ENCODE measurements at regions of chr11 and their contacts with region 1.

Region 1: DNA sequence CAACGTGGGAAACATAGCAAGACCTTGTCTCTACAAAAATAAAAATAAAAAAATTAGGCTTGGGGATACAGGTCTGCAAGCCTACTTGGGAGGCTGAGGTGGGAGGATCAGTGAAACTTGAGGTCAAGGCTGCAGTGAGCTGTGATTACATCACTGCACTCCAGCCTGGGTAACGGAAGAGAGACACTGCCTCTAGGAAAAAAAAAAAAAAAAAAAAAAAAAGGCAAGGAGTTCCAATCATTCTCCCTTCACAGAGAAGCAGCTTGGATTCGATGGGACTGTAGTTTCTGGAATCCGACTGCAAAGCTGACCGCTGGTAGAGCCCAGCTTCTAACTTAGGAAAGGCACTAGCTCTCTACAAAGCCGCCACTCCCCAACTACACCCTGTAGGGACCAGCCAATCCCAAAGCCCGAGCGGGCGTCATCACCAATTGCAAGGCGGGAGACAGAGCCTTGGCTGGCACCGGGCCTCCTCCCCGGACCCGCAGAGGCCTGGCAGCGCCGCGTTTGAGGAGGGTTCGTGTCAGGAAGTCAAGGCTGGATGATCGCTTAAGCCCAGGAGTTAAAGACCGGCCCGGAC is 699 bp upstream of the DDB2 start:
- DNase-seq: peak; percentile 62 to 87 (median 77)
- ATAC-seq: peak; percentile 75 to 81 (median 78)
- H3K4me3 ChIP-seq: peak overlapping the region; percentile 62 to 82
- H3K4me3 Mint-ChIP-seq: peak overlapping the region; percentile 88 to 98 (median 97)
- H3K27ac ChIP-seq: peak overlapping the region; percentile 87
- H3K27ac Mint-ChIP-seq: peak overlapping the region; percentile 99 to 100
- H3K4me1 ChIP-seq: peaks cover 14 to 36% of the 10 kb centered on the region in 2 experiments
- H3K4me1 Mint-ChIP-seq: peaks cover 35 to 38% (median 37%) of the 10 kb centered on the region in 3 donors
- H3K27me3 ChIP-seq: no peaks in the 10 kb centered on the region
- H3K27me3 Mint-ChIP-seq: no peaks in the 10 kb centered on the region

Region 2: GRCh38 chr11:46827995-46828394 is 386.1 kb before region 1 on chr11:
- CTCF ChIA-PET with region 1: interaction called in 1 of 2 experiments, 10 read pairs
- POLR2A ChIA-PET with region 1: no interaction called
- DNase-seq: no peak
- ATAC-seq: no peak
- H3K4me3 ChIP-seq: no peak overlapping the region
- H3K4me3 Mint-ChIP-seq: peak overlapping the region in 1 of 3 donors; percentile 87
- H3K27ac ChIP-seq: no peak overlapping the region
- H3K27ac Mint-ChIP-seq: no peak overlapping the region
- H3K4me1 ChIP-seq: peaks cover 5 to 17% of the 10 kb centered on the region in 2 experiments
- H3K4me1 Mint-ChIP-seq: peaks cover 30 to 40% (median 38%) of the 10 kb centered on the region in 3 donors
- H3K27me3 ChIP-seq: no peaks in the 10 kb centered on the region
- H3K27me3 Mint-ChIP-seq: no peaks in the 10 kb centered on the region

Region 3: GRCh38 chr11:47233989-47234668 is 20.1 kb after region 1 on chr11:
- CTCF ChIA-PET with region 1: interaction called, 5 to 11 read pairs
- POLR2A ChIA-PET with region 1: interaction called, 4 to 9 read pairs
- DNase-seq: peak in 10 of 35 experiments; percentile 2 to 55 (median 17)
- ATAC-seq: peak in 3 of 4 experiments; percentile 50 to 54 (median 51)
- H3K4me3 ChIP-seq: no peak overlapping the region
- H3K4me3 Mint-ChIP-seq: peak overlapping the region; percentile 59 to 82 (median 71)
- H3K27ac ChIP-seq: peak overlapping the region; percentile 73
- H3K27ac Mint-ChIP-seq: peak overlapping the region; percentile 94
- H3K4me1 ChIP-seq: peaks cover 0 to 15% of the 10 kb centered on the region in 2 experiments
- H3K4me1 Mint-ChIP-seq: peaks cover 12 to 30% (median 28%) of the 10 kb centered on the region in 3 donors
- H3K27me3 ChIP-seq: no peaks in the 10 kb centered on the region
- H3K27me3 Mint-ChIP-seq: no peaks in the 10 kb centered on the region

Region 4: DNA sequence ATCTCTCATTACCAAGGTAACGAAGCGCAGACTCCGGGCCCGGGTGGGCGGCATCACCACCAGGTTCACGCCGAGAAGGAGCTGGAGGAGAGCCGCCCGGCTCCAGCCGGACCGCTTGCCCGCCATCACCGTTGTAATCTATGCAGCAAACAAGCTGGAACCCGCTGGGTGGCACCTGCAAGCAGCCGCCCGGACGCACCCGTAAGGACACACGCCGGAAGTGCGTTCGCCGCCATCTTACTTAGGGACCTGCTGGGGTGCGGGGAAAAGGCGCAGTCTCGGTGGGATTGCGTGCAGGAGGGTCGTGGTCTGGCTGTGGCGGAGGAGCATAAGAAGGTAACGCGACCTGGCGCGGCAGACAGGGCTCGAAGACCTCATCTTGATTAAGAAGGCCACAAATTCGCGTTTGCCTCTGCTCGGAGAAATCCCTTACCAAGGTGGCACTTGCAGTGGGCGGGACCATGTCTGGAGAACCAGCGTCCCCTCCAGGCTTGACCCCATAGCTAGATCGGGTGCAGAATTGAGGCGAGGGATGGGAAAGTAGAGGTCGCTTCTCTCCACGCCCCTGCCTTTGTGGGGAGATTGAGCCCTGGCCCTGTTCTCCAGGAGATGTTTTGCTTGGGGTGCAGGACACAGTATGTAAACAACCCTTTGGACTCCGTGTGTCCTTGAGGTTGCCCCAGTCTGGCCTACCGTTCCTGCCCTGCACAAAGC is 34.7 kb after region 1 on chr11 and contains the start of gene ACP2:
- CTCF ChIA-PET with region 1: interaction called in 1 of 2 experiments, 6 read pairs
- POLR2A ChIA-PET with region 1: interaction called, 9 to 10 read pairs
- DNase-seq: peak; percentile 69 to 91 (median 81)
- ATAC-seq: peak; percentile 96 to 98 (median 97)
- H3K4me3 ChIP-seq: peak within 1 kb of the TSS; percentile 89 to 90
- H3K4me3 Mint-ChIP-seq: peak within 1 kb of the TSS; percentile 88 to 98 (median 96)
- H3K27ac ChIP-seq: peak within 1 kb of the TSS; percentile 66
- H3K27ac Mint-ChIP-seq: peak within 1 kb of the TSS; percentile 96 to 99
- H3K4me1 ChIP-seq: peaks cover 5 to 24% of the 10 kb centered on the region in 2 experiments
- H3K4me1 Mint-ChIP-seq: peaks cover 15 to 30% (median 28%) of the 10 kb centered on the region in 3 donors
- H3K27me3 ChIP-seq: no peaks in the 10 kb centered on the region
- H3K27me3 Mint-ChIP-seq: no peaks in the 10 kb centered on the region
- total RNA-seq, gene ACP2: 16.2 to 26.8 (median 21.9) TPM

Region 5: GRCh38 chr11:47415949-47416472 is 201.9 kb after region 1 on chr11:
- CTCF ChIA-PET with region 1: no interaction called
- POLR2A ChIA-PET with region 1: no interaction called
- DNase-seq: no peak
- ATAC-seq: no peak
- H3K4me3 ChIP-seq: no peak overlapping the region
- H3K4me3 Mint-ChIP-seq: no peak overlapping the region
- H3K27ac ChIP-seq: no peak overlapping the region
- H3K27ac Mint-ChIP-seq: no peak overlapping the region
- H3K4me1 ChIP-seq: peaks cover 0 to 6% of the 10 kb centered on the region in 2 experiments
- H3K4me1 Mint-ChIP-seq: peaks cover 0 to 2% (median 0%) of the 10 kb centered on the region in 3 donors
- H3K27me3 ChIP-seq: no peaks in the 10 kb centered on the region
- H3K27me3 Mint-ChIP-seq: no peaks in the 10 kb centered on the region